Activated naive CD4-positive, alpha-beta T cell treated with anti-CD3 and anti-CD28 coated beads for 36 hours (primary cell): ENCODE measurements at regions of chr19 and their contacts with region 1.

Region 1: GRCh38 chr19:40777937-40778705 is at the start of gene RAB4B:
- DNase-seq: peak; percentile 100
- H3K4me3 Mint-ChIP-seq: peak within 1 kb of the TSS; percentile 85
- H3K27ac Mint-ChIP-seq: peak within 1 kb of the TSS; percentile 91
- H3K4me1 Mint-ChIP-seq: peaks cover 39% of the 10 kb centered on the region
- H3K27me3 Mint-ChIP-seq: no peaks in the 10 kb centered on the region
- total RNA-seq, gene RAB4B: 40.0 to 40.3 TPM

Region 2: GRCh38 chr19:40614622-40615411 is 163.3 kb before region 1 on chr19:
- CTCF ChIA-PET with region 1: no interaction called
- intact Hi-C with region 1: loop called (anchors 1 kb)
- DNase-seq: peak; percentile 98
- H3K4me3 Mint-ChIP-seq: peak overlapping the region; percentile 88
- H3K27ac Mint-ChIP-seq: peak overlapping the region; percentile 97
- H3K4me1 Mint-ChIP-seq: peaks cover 67% of the 10 kb centered on the region
- H3K27me3 Mint-ChIP-seq: no peaks in the 10 kb centered on the region

Region 3: GRCh38 chr19:40724855-40725254 is 53.3 kb before region 1 on chr19:
- CTCF ChIA-PET with region 1: no interaction called
- intact Hi-C with region 1: loop called (anchors 2 kb)
- DNase-seq: peak; percentile 45
- H3K4me3 Mint-ChIP-seq: no peak overlapping the region
- H3K27ac Mint-ChIP-seq: peak overlapping the region; percentile 70
- H3K4me1 Mint-ChIP-seq: peaks cover 45% of the 10 kb centered on the region
- H3K27me3 Mint-ChIP-seq: no peaks in the 10 kb centered on the region

Region 4: DNA sequence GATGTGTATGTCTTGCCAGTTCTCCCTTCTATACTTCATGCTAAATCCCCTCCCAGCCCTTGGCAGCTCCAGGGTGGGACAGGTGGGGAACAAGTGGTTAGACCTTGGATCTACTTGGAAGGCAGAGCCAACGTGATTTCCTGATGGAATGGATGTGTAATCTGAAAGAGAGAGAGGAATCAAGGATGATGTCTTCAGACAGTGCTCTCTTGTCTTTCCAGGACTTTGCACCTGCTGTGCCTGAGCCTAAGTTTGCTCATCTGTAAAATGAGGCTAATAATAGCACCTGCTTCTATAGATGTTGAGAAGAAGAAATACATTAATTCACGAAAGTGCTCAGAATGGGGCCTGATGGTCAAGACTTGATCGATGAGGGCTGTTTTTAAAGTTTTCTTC is 13.9 kb after region 1 on chr19:
- CTCF ChIA-PET with region 1: no interaction called
- intact Hi-C with region 1: loop called (anchors 1 kb)
- DNase-seq: no peak
- H3K4me3 Mint-ChIP-seq: no peak overlapping the region
- H3K27ac Mint-ChIP-seq: peak overlapping the region; percentile 80
- H3K4me1 Mint-ChIP-seq: peaks cover 21% of the 10 kb centered on the region
- H3K27me3 Mint-ChIP-seq: no peaks in the 10 kb centered on the region

Region 5: GRCh38 chr19:40798223-40798996 is 20.3 kb after region 1 on chr19:
- CTCF ChIA-PET with region 1: interaction called, 4 read pairs
- intact Hi-C with region 1: loop called (anchors 1 kb)
- DNase-seq: peak; percentile 100
- H3K4me3 Mint-ChIP-seq: peak overlapping the region; percentile 92
- H3K27ac Mint-ChIP-seq: peak overlapping the region; percentile 97
- H3K4me1 Mint-ChIP-seq: peaks cover 49% of the 10 kb centered on the region
- H3K27me3 Mint-ChIP-seq: no peaks in the 10 kb centered on the region

Region 6: DNA sequence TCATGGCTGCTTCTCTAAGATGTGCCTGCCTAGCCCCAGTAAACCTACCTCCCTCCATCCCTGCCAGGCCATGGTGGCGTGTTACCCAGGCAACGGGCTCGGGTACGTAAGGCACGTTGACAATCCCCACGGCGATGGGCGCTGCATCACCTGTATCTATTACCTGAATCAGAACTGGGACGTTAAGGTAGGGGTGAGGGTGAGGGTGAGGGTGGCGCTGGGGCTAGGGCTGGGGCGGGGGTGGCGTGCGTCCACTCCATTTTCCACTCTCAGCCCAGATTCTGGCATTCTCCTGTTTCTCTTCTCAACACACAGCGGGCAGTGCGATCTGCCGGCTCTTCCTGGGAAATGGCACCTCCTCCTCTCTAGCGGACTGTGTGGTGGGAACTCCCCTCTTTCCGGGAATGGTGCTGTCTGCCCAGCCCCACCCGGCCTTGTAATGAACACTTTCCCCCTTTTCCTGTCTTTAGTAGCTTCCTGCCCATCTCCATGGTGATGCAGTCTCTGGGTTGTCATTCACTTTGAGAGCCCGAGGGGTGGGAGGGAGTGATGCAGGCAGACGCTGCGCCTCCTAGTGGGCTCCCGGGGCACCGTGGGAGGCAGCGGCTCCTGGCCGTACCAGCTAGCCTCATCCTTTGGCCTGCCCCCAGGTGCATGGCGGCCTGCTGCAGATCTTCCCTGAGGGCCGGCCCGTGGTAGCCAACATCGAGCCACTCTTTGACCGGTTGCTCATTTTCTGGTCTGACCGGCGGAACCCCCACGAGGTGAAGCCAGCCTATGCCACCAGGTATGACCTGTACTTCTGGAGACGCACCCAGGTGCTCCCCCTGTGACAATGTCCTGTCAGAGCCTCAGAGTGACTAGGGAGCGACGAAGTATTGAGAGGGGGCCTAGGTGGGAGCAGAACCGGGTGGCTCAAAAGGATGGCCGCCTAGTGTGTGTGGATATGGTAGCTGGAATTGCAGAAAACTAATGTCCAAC is 28.7 kb after region 1 on chr19:
- CTCF ChIA-PET with region 1: interaction called, 27 read pairs
- intact Hi-C with region 1: loop called (anchors 1 kb)
- DNase-seq: peak; percentile 90
- H3K4me3 Mint-ChIP-seq: peak overlapping the region; percentile 67
- H3K27ac Mint-ChIP-seq: peak overlapping the region; percentile 93
- H3K4me1 Mint-ChIP-seq: peaks cover 81% of the 10 kb centered on the region
- H3K27me3 Mint-ChIP-seq: no peaks in the 10 kb centered on the region

Region 7: GRCh38 chr19:40813182-40813958 is 35.2 kb after region 1 on chr19:
- CTCF ChIA-PET with region 1: interaction called, 18 read pairs
- intact Hi-C with region 1: no loop called
- DNase-seq: no peak
- H3K4me3 Mint-ChIP-seq: no peak overlapping the region
- H3K27ac Mint-ChIP-seq: no peak overlapping the region
- H3K4me1 Mint-ChIP-seq: peaks cover 35% of the 10 kb centered on the region
- H3K27me3 Mint-ChIP-seq: no peaks in the 10 kb centered on the region